Dorsolateral prefrontal cortex (tissue), 120 donors: ENCODE measurements at regions of chr1 and their contacts with region 1.

Region 1: GRCh38 chr1:21659099-21659923 is 9.8 kb downstream of the RAP1GAP start:
- DNase-seq: peak; percentile 74 to 88 (median 81)
- H3K4me3 ChIP-seq: peak overlapping the region in 58 of 59 donors; percentile 3 to 62 (median 44)
- H3K27ac ChIP-seq: peak overlapping the region in 46 of 59 donors; percentile 1 to 82 (median 54)
- H3K27me3 ChIP-seq: no peaks in the 10 kb centered on the region
- CTCF ChIP-seq: peak; percentile 74 to 99 (median 94)

Region 2: GRCh38 chr1:20932437-20932977 is 726.8 kb before region 1 on chr1:
- intact Hi-C with region 1: no loop called
- DNase-seq: no peak
- H3K4me3 ChIP-seq: no peak overlapping the region
- H3K27ac ChIP-seq: no peak overlapping the region
- H3K27me3 ChIP-seq: no peaks in the 10 kb centered on the region
- CTCF ChIP-seq: no peak

Region 3: GRCh38 chr1:21368515-21369289 is 290.6 kb before region 1 on chr1:
- intact Hi-C with region 1: loop called in 1 of 2 experiments (anchors 1 kb)
- DNase-seq: peak; percentile 66 to 87 (median 82)
- H3K4me3 ChIP-seq: no peak overlapping the region
- H3K27ac ChIP-seq: no peak overlapping the region
- H3K27me3 ChIP-seq: no peaks in the 10 kb centered on the region
- CTCF ChIP-seq: peak; percentile 73 to 99 (median 98)

Region 4: DNA sequence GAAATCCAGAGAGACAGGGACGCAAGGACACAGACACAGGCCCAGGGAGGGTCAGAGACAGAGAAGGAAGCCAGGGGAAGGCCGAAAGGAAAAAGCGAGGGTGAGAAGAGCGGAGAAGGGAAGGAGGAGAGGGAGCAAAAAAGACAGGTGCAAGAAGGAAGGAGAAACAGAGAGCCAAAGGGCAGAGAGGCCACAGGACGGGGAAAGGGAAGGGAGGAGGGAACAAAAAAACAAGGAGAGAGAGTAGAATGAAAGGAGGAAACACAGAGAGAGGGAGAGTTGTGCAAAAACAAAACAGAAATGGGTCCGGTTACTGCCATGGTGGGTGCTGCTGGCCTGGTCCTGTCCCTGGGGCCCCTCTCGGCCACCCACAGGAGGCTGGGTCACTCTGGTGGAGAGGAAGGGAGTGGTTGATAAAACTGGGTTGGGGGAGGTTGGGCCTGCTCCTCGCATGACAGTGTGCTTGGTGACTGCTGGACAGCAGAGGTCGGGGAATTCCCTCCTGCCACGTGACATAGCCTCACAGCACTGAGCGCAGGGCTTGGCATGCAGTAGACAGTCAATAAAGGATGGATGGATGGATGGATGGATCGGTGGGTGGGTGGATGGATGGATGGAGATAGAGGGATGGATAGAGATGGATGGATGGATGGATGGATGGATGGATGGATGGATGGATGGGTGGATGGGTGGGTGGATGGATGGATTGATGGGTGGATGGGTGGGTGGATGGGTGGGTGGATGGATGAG is 54.9 kb before region 1 on chr1:
- intact Hi-C with region 1: loop called in 1 of 2 experiments (anchors 5 kb)
- DNase-seq: no peak
- H3K4me3 ChIP-seq: no peak overlapping the region
- H3K27ac ChIP-seq: peak overlapping the region in 5 of 59 donors; percentile 20 to 58 (median 36)
- H3K27me3 ChIP-seq: no peaks in the 10 kb centered on the region
- CTCF ChIP-seq: no peak

Region 5: GRCh38 chr1:21703318-21703963 is 44.1 kb after region 1 on chr1:
- intact Hi-C with region 1: loop called in 1 of 2 experiments (anchors 5 kb)
- DNase-seq: peak in 1 of 10 donors; percentile 62
- H3K4me3 ChIP-seq: peak overlapping the region in 8 of 59 donors; percentile 8 to 55 (median 18)
- H3K27ac ChIP-seq: peak overlapping the region in 55 of 59 donors; percentile 19 to 96 (median 87)
- H3K27me3 ChIP-seq: no peaks in the 10 kb centered on the region
- CTCF ChIP-seq: peak in 55 of 56 donors; percentile 27 to 67 (median 46)

Region 6: DNA sequence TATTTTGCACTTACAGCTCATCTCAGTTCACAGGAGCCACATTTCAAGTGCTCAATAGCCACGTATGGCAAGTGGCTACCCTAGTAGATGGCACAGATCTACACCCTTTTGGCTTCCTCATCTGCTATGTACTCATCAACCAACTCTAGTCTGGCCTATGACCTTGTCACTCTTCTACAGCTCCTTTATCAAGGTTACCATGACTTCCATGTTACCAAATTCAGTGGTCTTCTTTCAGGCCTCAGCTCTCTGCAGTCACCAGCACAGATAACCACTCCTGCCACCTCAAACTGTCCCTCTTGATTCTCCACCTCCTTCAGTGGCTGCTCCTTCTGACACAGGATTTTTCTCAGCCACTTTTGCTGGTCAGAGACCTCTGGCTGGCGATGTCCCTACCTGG is 135.3 kb after region 1 on chr1:
- intact Hi-C with region 1: no loop called
- DNase-seq: no peak
- H3K4me3 ChIP-seq: no peak overlapping the region
- H3K27ac ChIP-seq: no peak overlapping the region
- H3K27me3 ChIP-seq: no peaks in the 10 kb centered on the region
- CTCF ChIP-seq: no peak